Dorsolateral prefrontal cortex (tissue), 120 donors: ENCODE measurements at regions of chr12 and their contacts with region 1.

Region 1: DNA sequence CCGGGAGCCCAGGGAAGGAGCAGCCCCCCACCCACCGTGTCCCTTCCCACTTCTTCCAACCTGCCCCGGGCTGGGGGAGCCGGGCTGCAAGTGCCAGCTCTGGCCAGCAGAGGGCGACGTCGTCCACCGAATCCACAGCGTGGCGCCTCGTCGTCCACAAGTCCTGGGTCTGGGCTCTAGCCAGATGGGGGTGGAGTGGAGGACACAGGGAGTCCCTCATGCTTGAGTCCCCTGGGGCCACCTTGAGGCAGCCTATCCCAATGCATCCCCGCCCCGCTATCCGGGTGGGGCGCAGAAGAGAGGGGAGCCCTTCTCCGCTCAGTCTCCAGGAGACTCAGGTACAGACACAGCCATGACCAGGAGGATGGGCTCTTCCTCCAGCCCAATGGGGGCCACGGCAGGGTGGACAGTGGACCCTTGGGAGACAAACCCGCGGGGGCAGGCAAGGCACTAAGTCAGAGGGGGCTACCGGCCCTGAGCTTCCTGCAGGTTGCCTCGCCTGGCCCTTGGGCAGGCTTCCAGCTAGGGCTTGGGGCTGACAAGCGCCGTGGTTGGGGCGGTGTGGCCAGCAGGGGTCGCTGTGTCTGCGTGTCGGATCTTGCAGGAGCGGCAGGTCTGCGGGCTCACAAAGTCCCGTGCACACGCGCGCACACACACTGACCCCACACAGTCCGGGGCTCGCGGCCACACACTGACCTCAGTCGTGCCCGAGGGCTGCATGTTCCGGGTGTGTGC is 5.5 kb downstream of the AQP5 start:
- DNase-seq: peak; percentile 89 to 96 (median 92)
- H3K4me3 ChIP-seq: peak overlapping the region; percentile 35 to 77 (median 58)
- H3K27ac ChIP-seq: peak overlapping the region in 47 of 59 donors; percentile 14 to 88 (median 76)
- H3K27me3 ChIP-seq: peaks cover 0 to under 1% (median 0%) of the 10 kb centered on the region in 45 donors
- CTCF ChIP-seq: peak; percentile 64 to 97 (median 85)

Region 2: GRCh38 chr12:50055831-50056638 is 88.8 kb after region 1 on chr12:
- intact Hi-C with region 1: loop called (anchors 1 kb)
- DNase-seq: peak; percentile 36 to 71 (median 64)
- H3K4me3 ChIP-seq: peak overlapping the region in 48 of 59 donors; percentile 0 to 81 (median 71)
- H3K27ac ChIP-seq: peak overlapping the region in 56 of 59 donors; percentile 8 to 90 (median 76)
- H3K27me3 ChIP-seq: no peaks in the 10 kb centered on the region
- CTCF ChIP-seq: peak; percentile 75 to 99 (median 95)

Region 3: GRCh38 chr12:50074936-50075807 is 108.0 kb after region 1 on chr12:
- intact Hi-C with region 1: loop called (anchors 1 to 5 kb)
- DNase-seq: peak; percentile 80 to 88 (median 82)
- H3K4me3 ChIP-seq: peak overlapping the region in 1 of 59 donors; percentile 12
- H3K27ac ChIP-seq: peak overlapping the region in 3 of 59 donors; percentile 29 to 41 (median 37)
- H3K27me3 ChIP-seq: no peaks in the 10 kb centered on the region
- CTCF ChIP-seq: peak; percentile 71 to 98 (median 94)

Region 4: GRCh38 chr12:50174971-50175715 is 207.9 kb after region 1 on chr12:
- intact Hi-C with region 1: loop called (anchors 5 to 10 kb)
- DNase-seq: no peak
- H3K4me3 ChIP-seq: peak overlapping the region in 11 of 59 donors; percentile 3 to 36 (median 16)
- H3K27ac ChIP-seq: peak overlapping the region in 21 of 59 donors; percentile 2 to 75 (median 53)
- H3K27me3 ChIP-seq: no peaks in the 10 kb centered on the region
- CTCF ChIP-seq: peak; percentile 67 to 95 (median 85)

Region 5: GRCh38 chr12:51886021-51886322 is 1918.8 kb after region 1 on chr12:
- intact Hi-C with region 1: no loop called
- DNase-seq: peak in 3 of 10 donors; percentile 26 to 51 (median 46)
- H3K4me3 ChIP-seq: peak overlapping the region in 5 of 59 donors; percentile 3 to 17 (median 9)
- H3K27ac ChIP-seq: peak overlapping the region in 21 of 59 donors; percentile 9 to 72 (median 43)
- H3K27me3 ChIP-seq: peaks cover 0 to 5% (median 0%) of the 10 kb centered on the region in 45 donors
- CTCF ChIP-seq: peak in 2 of 56 donors; percentile 0 to 1